Brain microvascular endothelial cell (primary cell): ENCODE measurements at regions of chr12 and their contacts with region 1.

Region 1: GRCh38 chr12:47328831-47329545 is 249.2 kb upstream of the AMIGO2 start:
- DNase-seq: no peak
- H3K4me3 ChIP-seq: no peak overlapping the region
- H3K27ac ChIP-seq: no peak overlapping the region
- H3K27me3 ChIP-seq: no peaks in the 10 kb centered on the region
- CTCF ChIP-seq: no peak

Region 2: DNA sequence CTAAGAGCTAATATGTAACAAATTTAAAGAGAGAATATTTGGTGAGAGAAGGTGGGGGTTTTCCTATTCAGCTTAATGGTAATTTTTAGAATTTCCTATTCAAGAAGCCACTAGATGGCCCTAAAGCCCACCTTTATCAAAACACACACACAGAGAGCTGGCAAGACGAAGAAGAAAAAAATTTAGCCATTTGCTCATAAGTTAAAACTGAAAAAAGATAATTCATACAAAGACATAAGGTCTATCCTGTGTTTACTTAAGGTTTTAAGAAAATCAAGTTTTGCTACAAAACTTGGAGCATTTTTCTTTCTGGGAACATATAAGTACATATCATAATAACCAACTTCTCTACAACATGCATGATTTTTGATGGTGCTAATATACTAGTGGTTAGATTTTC is 296.3 kb before region 1 on chr12:
- in situ Hi-C with region 1: loop called (anchors 10 kb)
- DNase-seq: peak; percentile 51
- H3K4me3 ChIP-seq: no peak overlapping the region
- H3K27ac ChIP-seq: no peak overlapping the region
- H3K27me3 ChIP-seq: no peaks in the 10 kb centered on the region
- CTCF ChIP-seq: peak; percentile 40

Region 3: DNA sequence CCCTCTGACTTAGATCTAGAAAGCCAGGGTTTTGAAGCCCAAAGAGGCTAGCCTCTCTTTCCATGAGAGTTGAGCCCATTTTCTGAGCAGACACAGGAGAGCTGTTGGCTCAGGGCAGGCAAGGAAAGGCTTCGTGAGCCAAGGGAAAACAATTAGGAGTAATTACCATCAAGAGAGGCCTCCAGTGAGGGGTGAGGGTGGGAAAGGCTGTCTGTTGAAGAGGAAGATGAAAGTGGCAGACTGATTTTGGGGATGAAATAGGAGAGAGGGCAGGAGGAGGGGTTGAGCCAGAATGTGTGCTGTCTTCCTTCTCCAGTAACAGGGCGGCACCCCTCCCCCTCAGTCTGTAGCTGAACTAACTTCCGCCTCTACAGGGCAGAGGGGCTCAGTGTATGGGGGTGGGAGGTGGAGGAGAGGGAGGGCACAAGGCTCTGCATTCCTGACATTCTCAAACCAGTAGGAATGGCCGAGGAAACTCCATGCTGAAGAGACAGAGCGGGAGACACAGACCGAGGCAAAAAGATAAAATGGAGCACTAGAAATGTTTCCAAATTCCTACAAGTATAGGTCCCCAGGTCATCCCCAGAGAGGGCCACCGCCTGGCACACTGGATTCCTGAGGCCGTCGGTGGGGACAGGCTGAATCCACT is 708.4 kb after region 1 on chr12:
- in situ Hi-C with region 1: no loop called
- DNase-seq: peak; percentile 19
- H3K4me3 ChIP-seq: no peak overlapping the region
- H3K27ac ChIP-seq: no peak overlapping the region
- H3K27me3 ChIP-seq: no peaks in the 10 kb centered on the region
- CTCF ChIP-seq: no peak